ENCODE measurements at regions of chrX and their contacts with region 1.

Region 1: GRCh38 chrX:18390941-18391538 is 34.4 kb upstream of the CDKL5 start:
- DNase-seq: peak; percentile 26 to 36
- ATAC-seq: no peak
- H3K4me3 ChIP-seq: no peak overlapping the region
- H3K27ac ChIP-seq: no peak overlapping the region
- H3K4me1 ChIP-seq: no peaks in the 10 kb centered on the region
- H3K27me3 ChIP-seq: no peaks in the 10 kb centered on the region
- CTCF ChIP-seq: peak; percentile 47 to 81 (median 71)

Region 2: GRCh38 chrX:18173494-18174180 is 217.4 kb before region 1 on chrX:
- intact Hi-C with region 1: no loop called
- DNase-seq: peak in 1 of 2 donors; percentile 9
- ATAC-seq: peak in 6 of 8 donors; percentile 25 to 98 (median 85)
- H3K4me3 ChIP-seq: no peak overlapping the region
- H3K27ac ChIP-seq: peak overlapping the region in 1 of 10 donors; percentile 12
- H3K4me1 ChIP-seq: no peaks in the 10 kb centered on the region
- H3K27me3 ChIP-seq: peaks cover 0 to 7% (median 0%) of the 10 kb centered on the region in 7 donors
- CTCF ChIP-seq: no peak

Region 3: GRCh38 chrX:19326567-19326966 is 935.5 kb after region 1 on chrX:
- intact Hi-C with region 1: loop called in 5 of 10 experiments (anchors 5 to 10 kb)
- DNase-seq: no peak
- ATAC-seq: no peak
- H3K4me3 ChIP-seq: no peak overlapping the region
- H3K27ac ChIP-seq: no peak overlapping the region
- H3K4me1 ChIP-seq: no peaks in the 10 kb centered on the region
- H3K27me3 ChIP-seq: no peaks in the 10 kb centered on the region
- CTCF ChIP-seq: no peak